HCT116 (cell line): ENCODE measurements at regions of chr18 and their contacts with region 1.

Region 1: GRCh38 chr18:11387880-11388279 is 221.5 kb upstream of the SLC35G4 start:
- DNase-seq: peak; percentile 70
- ATAC-seq: peak; percentile 88
- H3K4me3 ChIP-seq: no peak overlapping the region
- H3K27ac ChIP-seq: no peak overlapping the region
- H3K4me1 ChIP-seq: no peaks in the 10 kb centered on the region
- H3K27me3 ChIP-seq: peaks cover 45% of the 10 kb centered on the region
- CTCF ChIP-seq: peak in 2 of 3 experiments; percentile 54 to 65; a peak in 4 of 6 replicates
- POLR2A ChIP-seq: no peak
- RAD21 ChIP-seq: peak; percentile 38

Region 2: DNA sequence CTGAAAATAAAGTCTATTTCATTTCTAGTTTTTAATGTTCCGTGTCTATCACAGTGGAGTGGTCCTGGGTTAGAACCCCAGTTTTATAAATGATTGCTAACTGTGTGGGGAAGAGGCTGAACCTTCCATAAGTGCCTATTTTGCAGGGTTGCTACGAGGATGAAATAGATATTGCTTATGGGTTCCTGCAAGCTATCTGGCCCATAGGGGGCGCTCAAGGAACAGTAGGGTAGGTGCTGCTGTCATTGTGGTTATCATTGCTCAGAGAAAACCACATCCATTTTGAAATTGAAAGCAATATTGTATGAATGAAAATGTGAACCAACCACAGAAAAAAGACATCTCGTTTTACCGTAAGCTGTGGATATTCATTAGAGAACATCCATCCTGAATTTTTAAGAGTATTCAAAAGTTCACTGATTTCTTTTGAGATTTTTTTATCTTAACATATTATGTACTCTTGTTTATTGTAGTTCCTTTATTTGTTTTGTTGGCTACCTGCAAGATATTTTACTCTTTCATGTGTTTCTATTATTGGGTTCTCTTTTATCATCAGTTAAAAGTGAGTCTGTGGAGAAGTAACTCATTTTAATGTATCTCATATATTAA is 600.5 kb before region 1 on chr18:
- CTCF ChIA-PET with region 1: no interaction called
- POLR2A ChIA-PET with region 1: no interaction called
- RAD21 ChIA-PET with region 1: no interaction called
- intact Hi-C with region 1: loop called (anchors 10 kb)
- DNase-seq: peak; percentile 51
- ATAC-seq: peak; percentile 82
- H3K4me3 ChIP-seq: no peak overlapping the region
- H3K27ac ChIP-seq: no peak overlapping the region
- H3K4me1 ChIP-seq: no peaks in the 10 kb centered on the region
- H3K27me3 ChIP-seq: peaks cover 45% of the 10 kb centered on the region
- CTCF ChIP-seq: peak; percentile 25 to 92 (median 89); a peak in 5 of 6 replicates
- POLR2A ChIP-seq: no peak
- RAD21 ChIP-seq: peak; percentile 60

Region 3: GRCh38 chr18:11163665-11164064 is 224.2 kb before region 1 on chr18:
- CTCF ChIA-PET with region 1: no interaction called
- POLR2A ChIA-PET with region 1: no interaction called
- RAD21 ChIA-PET with region 1: no interaction called
- intact Hi-C with region 1: loop called (anchors 10 kb)
- DNase-seq: no peak
- ATAC-seq: no peak
- H3K4me3 ChIP-seq: no peak overlapping the region
- H3K27ac ChIP-seq: no peak overlapping the region
- H3K4me1 ChIP-seq: no peaks in the 10 kb centered on the region
- H3K27me3 ChIP-seq: peaks cover 19% of the 10 kb centered on the region
- CTCF ChIP-seq: no peak
- POLR2A ChIP-seq: no peak
- RAD21 ChIP-seq: no peak